Calu3 (cell line): ENCODE measurements at regions of chr20 and their contacts with region 1.

Region 1: GRCh38 chr20:33731693-33732165 is at the start of gene ZNF341:
- DNase-seq: no peak
- H3K4me3 Mint-ChIP-seq: peak within 1 kb of the TSS; percentile 78
- H3K27ac Mint-ChIP-seq: peak within 1 kb of the TSS; percentile 76
- H3K4me1 Mint-ChIP-seq: peaks cover 38% of the 10 kb centered on the region
- H3K27me3 Mint-ChIP-seq: no peaks in the 10 kb centered on the region
- CTCF ChIP-seq: peak; percentile 95
- total RNA-seq, gene ZNF341: 10.2 and 12.9 TPM in 2 replicates

Region 2: DNA sequence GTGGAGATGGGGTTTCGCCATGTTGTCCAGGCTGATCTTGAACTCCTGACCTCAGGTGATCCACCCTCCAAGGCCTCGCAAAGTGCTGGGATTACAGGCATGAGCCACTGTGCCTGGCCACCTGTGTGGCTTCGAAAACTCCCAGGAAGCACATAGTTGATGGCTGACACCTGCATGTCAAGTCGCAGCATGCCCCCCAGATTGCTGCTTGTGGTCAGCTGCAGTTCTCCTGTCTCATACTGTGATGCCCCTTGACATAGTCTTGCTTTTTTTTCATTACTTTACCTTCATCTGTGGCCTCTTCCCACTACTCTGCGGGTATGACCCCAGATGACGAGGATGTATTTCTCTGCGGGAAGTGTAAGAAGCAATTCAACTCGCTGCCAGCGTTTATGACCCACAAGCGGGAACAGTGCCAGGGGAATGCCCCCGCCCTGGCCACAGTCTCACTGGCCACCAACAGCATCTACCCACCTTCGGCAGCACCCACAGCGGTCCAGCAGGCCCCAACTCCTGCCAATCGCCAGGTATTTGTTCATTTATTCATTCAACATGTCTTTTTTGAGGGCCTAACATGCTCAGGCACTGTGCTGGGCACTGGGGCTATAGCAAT is 13.2 kb after region 1 on chr20:
- CTCF ChIA-PET with region 1: interaction called, 11 read pairs
- intact Hi-C with region 1: no loop called
- DNase-seq: no peak
- H3K4me3 Mint-ChIP-seq: no peak overlapping the region
- H3K27ac Mint-ChIP-seq: no peak overlapping the region
- H3K4me1 Mint-ChIP-seq: peaks cover 20% of the 10 kb centered on the region
- H3K27me3 Mint-ChIP-seq: no peaks in the 10 kb centered on the region
- CTCF ChIP-seq: no peak

Region 3: GRCh38 chr20:33773412-33774089 is 41.8 kb after region 1 on chr20:
- CTCF ChIA-PET with region 1: no interaction called
- intact Hi-C with region 1: loop called (anchors 2 kb)
- DNase-seq: no peak
- H3K4me3 Mint-ChIP-seq: no peak overlapping the region
- H3K27ac Mint-ChIP-seq: no peak overlapping the region
- H3K4me1 Mint-ChIP-seq: peaks cover 25% of the 10 kb centered on the region
- H3K27me3 Mint-ChIP-seq: no peaks in the 10 kb centered on the region
- CTCF ChIP-seq: no peak

Region 4: DNA sequence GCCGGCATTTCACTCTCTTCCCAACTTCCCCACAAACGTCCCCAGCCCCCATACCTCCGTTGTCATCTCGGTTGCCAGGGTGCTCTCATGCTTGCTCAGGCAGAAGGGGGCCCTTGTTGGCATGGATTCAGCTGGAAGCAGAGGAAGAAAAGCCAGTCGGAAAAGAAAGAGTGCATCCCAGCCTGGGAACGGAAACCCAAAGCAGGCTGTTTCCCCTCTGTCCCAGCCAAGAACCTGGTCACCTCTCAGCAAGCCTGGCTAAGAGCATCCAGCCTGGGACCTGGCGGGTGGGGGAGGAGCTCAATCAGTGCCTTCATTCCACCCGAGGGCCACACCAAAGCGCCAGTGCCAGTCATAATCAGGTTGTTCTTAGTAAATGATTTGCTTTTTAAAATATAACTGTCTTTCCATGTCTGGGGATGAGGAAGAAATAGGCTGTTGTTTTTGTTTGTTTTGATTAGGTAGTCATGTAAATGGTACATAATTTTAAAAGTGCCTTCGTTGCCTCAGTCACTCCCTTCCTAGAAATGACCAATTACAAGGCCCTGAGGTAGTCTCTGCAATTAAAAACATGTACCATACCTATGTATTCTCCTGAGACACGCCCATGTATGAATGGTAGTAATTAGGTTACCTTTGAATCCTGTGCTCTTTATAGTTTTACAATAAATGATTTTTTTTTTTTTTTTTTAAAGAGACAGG is 100.5 kb after region 1 on chr20:
- CTCF ChIA-PET with region 1: no interaction called
- intact Hi-C with region 1: no loop called
- DNase-seq: no peak
- H3K4me3 Mint-ChIP-seq: no peak overlapping the region
- H3K27ac Mint-ChIP-seq: no peak overlapping the region
- H3K4me1 Mint-ChIP-seq: peaks cover 83% of the 10 kb centered on the region
- H3K27me3 Mint-ChIP-seq: no peaks in the 10 kb centered on the region
- CTCF ChIP-seq: no peak

Region 5: GRCh38 chr20:33915726-33916331 is 184.1 kb after region 1 on chr20:
- CTCF ChIA-PET with region 1: no interaction called
- intact Hi-C with region 1: loop called (anchors 5 kb)
- DNase-seq: peak; percentile 81
- H3K4me3 Mint-ChIP-seq: no peak overlapping the region
- H3K27ac Mint-ChIP-seq: no peak overlapping the region
- H3K4me1 Mint-ChIP-seq: peaks cover 31% of the 10 kb centered on the region
- H3K27me3 Mint-ChIP-seq: no peaks in the 10 kb centered on the region
- CTCF ChIP-seq: peak; percentile 89